ENCODE measurements at regions of chr7 and their contacts with region 1.

Region 1: DNA sequence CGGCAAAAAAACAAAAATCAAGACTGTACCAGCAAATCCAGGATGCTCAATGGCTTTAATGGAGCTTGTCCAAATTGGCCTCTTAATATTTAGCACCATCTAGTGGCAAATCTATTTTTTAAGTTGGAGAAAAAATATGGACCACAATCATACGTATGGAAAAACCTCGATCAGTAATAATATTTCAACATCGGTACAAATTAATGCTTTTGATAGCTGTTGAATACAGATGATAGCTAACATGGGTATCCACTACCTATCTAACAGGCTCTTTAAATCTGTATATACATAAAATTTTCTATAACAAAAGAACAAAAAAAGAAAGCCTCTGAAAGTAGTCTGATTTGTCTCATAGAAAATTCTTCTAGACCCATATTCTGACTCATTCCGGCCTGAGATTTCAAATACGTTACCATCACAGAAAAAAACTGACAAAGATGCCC is 29.2 kb downstream of the COA1 start:
- DNase-seq: no peak
- CTCF ChIP-seq: peak; percentile 44

Region 2: GRCh38 chr7:43572516-43573049 is 127.5 kb before region 1 on chr7:
- CTCF ChIA-PET with region 1: interaction called, 11 read pairs
- POLR2A ChIA-PET with region 1: no interaction called
- DNase-seq: no peak
- CTCF ChIP-seq: no peak

Region 3: GRCh38 chr7:43639858-43640491 is 60.1 kb before region 1 on chr7:
- CTCF ChIA-PET with region 1: interaction called, 93 read pairs
- POLR2A ChIA-PET with region 1: no interaction called
- DNase-seq: no peak
- CTCF ChIP-seq: no peak

Region 4: DNA sequence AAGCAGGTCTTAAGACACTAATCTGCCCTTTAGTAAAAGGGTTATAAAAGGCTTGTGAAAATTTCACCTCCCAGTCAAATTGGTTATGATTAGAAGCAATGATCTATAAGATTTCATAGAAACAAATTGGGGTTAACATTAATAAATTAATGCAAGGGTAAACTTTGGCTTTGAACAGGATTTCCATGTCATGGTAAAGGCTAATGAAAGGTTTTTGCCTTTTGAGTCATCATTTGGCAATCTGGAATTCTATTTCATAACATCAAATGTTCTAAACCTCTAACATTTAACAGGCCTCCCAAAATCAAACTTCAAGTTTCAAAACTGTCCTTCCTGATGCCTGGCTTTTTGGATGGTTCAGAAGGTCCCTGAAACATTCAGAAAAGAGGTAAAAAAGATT is 33.1 kb before region 1 on chr7:
- CTCF ChIA-PET with region 1: interaction called, 14 read pairs
- POLR2A ChIA-PET with region 1: no interaction called
- DNase-seq: no peak
- CTCF ChIP-seq: no peak

Region 5: GRCh38 chr7:43721193-43721806 is 21.2 kb after region 1 on chr7:
- CTCF ChIA-PET with region 1: interaction called, 68 read pairs
- POLR2A ChIA-PET with region 1: no interaction called
- DNase-seq: no peak
- CTCF ChIP-seq: peak; percentile 48

Region 6: DNA sequence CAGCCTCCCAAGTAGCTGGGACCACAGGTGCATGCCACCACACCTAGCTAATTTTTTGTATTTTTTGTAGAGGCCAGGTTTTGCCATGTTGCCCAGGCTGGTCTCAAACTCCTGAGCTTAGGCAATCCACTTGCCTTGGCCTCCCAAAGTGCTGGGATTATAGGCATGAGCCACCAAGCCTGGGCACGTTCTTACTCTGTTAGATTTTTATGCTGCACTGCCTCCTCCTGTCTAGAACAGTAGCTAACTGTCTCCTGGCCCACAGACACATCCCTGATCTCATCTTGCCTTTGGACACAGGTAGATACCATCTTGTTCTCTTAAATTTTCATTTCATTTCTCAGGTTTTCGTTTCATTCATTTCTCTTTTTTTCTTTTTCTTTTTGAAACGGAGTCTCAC is 99.5 kb after region 1 on chr7:
- CTCF ChIA-PET with region 1: no interaction called
- POLR2A ChIA-PET with region 1: no interaction called
- DNase-seq: no peak
- CTCF ChIP-seq: peak; percentile 23

Region 7: GRCh38 chr7:43834463-43835251 is 134.6 kb after region 1 on chr7:
- CTCF ChIA-PET with region 1: interaction called, 34 read pairs
- POLR2A ChIA-PET with region 1: no interaction called
- DNase-seq: no peak
- CTCF ChIP-seq: no peak

Measured in GM10248 (cell line).